Activated T-helper 1 cell treated with anti-CD3 and anti-CD28 coated beads, Interleukin-12 subunit alpha, Interleukin-12 subunit beta, Interleukin-2, Interleukin-4 antibody, amounts not matched to agents 30 ng/mL and 10 ng/mL and 1 ng/mL, durations not matched to agents 14 hours and 24 hours and 36 hours (primary cell): ENCODE measurements at regions of chr19 and their contacts with region 1.

Region 1: GRCh38 chr19:46704379-46705076 is 12.4 kb downstream of the PRKD2 start:
- DNase-seq: peak; percentile 71
- H3K4me3 Mint-ChIP-seq: no peak overlapping the region
- H3K27ac Mint-ChIP-seq: peak overlapping the region; percentile 20
- H3K4me1 Mint-ChIP-seq: peaks cover 9% of the 10 kb centered on the region
- H3K27me3 Mint-ChIP-seq: no peaks in the 10 kb centered on the region

Region 2: GRCh38 chr19:46728693-46729676 is 24.5 kb after region 1 on chr19:
- intact Hi-C with region 1: loop called (anchors 1 kb)
- DNase-seq: peak; percentile 74
- H3K4me3 Mint-ChIP-seq: no peak overlapping the region
- H3K27ac Mint-ChIP-seq: no peak overlapping the region
- H3K4me1 Mint-ChIP-seq: peaks cover 28% of the 10 kb centered on the region
- H3K27me3 Mint-ChIP-seq: no peaks in the 10 kb centered on the region

Region 3: DNA sequence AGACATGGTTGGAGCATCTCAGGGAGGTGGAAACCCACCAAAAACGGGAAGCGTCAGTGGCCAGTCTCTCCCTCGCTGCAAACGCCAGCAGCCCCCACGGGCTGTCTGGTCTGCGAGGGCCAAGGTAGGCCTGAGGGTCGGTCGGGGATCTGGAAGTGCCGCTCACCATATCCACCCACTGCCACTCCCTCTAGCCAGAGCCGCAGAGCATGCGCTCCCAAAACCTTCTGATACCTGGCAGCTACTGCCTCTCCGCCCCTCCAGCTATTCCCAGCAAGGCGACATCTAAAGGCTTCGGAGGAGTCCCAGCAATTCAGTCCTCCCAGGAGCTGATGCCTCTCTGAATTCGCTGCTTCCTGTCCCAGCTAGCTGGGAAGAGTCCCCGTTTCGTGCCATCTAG is 36.9 kb after region 1 on chr19:
- intact Hi-C with region 1: no loop called
- DNase-seq: no peak
- H3K4me3 Mint-ChIP-seq: no peak overlapping the region
- H3K27ac Mint-ChIP-seq: peak overlapping the region; percentile 10
- H3K4me1 Mint-ChIP-seq: peaks cover 35% of the 10 kb centered on the region
- H3K27me3 Mint-ChIP-seq: no peaks in the 10 kb centered on the region

Region 4: GRCh38 chr19:46753420-46754155 is 49.1 kb after region 1 on chr19:
- intact Hi-C with region 1: loop called (anchors 1 kb)
- DNase-seq: peak; percentile 56
- H3K4me3 Mint-ChIP-seq: no peak overlapping the region
- H3K27ac Mint-ChIP-seq: no peak overlapping the region
- H3K4me1 Mint-ChIP-seq: peaks cover 11% of the 10 kb centered on the region
- H3K27me3 Mint-ChIP-seq: no peaks in the 10 kb centered on the region